ENCODE measurements at regions of chr17 and their contacts with region 1.

Region 1: DNA sequence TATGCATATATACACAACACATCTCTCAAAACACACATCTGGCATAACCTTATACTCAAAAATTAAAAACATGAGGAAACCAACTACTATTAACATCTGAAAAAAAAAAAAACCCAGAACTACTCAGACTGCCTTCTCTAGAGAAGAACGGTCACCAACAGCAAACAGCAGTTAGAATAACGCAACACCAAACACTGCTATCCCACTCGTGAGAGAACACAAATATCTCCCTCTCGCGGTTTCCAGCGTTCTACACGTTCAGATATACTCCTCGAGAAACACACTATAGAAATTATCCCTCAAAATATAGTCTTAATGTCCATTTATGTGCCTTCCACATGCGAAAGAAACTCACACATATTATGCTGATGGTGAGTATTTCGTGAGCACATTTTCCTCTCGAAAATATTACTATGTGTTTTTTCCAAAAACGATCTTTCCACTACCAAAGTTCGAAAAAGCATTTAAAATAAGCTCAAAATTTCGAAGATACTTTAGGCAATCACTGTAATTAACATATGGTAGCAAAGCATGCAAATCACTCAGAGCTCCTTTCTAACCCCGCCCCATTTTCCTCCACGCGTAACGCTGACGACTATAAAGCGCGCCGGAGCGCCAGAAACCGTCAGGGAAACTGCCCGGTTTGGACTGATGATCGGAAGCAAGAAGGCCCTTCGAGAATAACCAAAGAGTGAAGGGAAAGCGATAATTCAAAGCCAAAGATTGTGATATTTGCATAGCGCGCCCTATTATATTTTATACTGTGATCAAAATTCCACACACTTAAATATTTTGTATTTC is 60.1 kb downstream of the TEX14 start:
- DNase-seq: peak; percentile 97 to 98
- H3K4me3 ChIP-seq: peak overlapping the region; percentile 33
- H3K4me3 Mint-ChIP-seq: no peak overlapping the region
- H3K27ac Mint-ChIP-seq: no peak overlapping the region
- H3K4me1 ChIP-seq: peaks cover 7% of the 10 kb centered on the region; the same call in 1 of the 2 replicates
- H3K4me1 Mint-ChIP-seq: no peaks in the 10 kb centered on the region
- H3K27me3 ChIP-seq: no peaks in the 10 kb centered on the region
- H3K27me3 Mint-ChIP-seq: peaks cover 3% of the 10 kb centered on the region
- CTCF ChIP-seq: peak; percentile 2 to 21

Region 2: DNA sequence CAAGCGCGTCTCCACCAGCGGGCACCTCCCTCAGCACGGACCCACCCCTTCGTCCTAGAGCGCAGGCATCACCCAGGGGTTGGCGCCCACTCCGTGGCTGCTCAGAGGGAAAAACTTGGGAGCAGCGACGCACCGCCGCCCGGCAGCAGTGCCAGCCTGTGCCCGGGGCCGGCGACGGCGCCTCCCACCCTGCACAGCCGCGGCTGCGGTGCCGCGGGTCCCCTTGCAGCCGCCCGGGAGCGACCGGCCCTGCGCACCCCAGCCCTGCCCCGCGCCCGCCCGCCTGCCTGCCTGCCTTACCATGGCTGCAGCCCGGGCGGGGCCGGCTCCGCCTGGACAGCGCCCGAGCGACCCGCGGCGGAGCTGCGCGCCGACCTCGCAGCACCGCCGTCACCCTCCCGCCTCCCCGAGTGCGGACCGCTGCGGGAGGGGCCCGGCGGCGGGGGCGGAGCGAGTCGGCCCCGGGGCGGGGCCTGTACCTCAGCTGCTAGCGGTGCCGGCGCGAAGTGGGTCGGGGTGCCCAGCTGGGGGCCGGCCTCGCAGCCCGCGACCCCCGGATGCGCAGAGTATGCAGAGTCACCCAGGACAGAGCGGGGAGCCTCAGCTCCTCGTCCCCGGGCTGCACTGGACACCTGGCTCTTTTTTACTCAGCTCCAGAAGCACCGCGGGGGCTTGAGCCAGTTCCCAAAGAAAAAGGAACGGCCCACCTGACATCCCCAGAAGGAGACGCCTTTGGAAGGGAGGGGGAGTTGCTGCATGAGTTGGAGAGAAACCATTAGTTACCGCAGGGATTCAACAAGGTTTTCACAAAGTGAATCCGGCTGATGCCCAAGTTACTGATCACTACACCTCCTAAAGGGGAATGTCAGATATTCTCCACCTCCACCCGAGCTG is 99.8 kb before region 1 on chr17:
- CTCF ChIA-PET with region 1: no interaction called
- POLR2A ChIA-PET with region 1: interaction called, 16 read pairs
- intact Hi-C with region 1: no loop called
- DNase-seq: peak; percentile 58 to 80
- H3K4me3 ChIP-seq: peak overlapping the region; percentile 33
- H3K4me3 Mint-ChIP-seq: peak overlapping the region; percentile 46
- H3K27ac Mint-ChIP-seq: no peak overlapping the region
- H3K4me1 ChIP-seq: peaks cover 34% of the 10 kb centered on the region
- H3K4me1 Mint-ChIP-seq: peaks cover 16% of the 10 kb centered on the region
- H3K27me3 ChIP-seq: no peaks in the 10 kb centered on the region
- H3K27me3 Mint-ChIP-seq: peaks cover 3% of the 10 kb centered on the region
- CTCF ChIP-seq: no peak

Region 3: DNA sequence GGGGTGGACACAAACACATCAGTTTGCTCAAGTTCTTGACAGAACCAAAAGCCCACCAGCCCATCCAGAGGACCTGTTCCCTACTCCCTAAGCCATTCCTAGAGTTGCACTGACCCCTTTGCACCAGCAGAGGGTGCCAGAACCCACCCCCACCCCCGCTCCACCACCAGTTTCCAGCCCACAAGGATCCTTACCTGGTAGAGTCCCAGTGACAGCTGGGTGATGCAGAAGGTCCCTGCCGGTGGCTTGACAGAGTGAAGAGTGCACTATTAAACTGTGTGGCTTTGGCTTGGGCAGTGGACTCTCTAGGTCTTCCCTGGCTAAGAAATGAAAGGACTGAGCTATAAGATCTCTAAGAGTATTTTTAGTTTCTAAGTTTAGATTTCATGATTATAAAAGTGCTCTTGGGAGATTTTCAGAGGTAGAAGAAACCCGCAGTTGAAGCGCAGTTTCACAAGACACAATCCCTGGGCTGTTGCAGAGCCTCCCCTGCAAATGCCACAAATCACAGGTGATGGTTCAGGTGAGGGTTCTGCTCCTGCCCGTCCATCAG is 43.9 kb before region 1 on chr17:
- CTCF ChIA-PET with region 1: interaction called, 6 read pairs
- POLR2A ChIA-PET with region 1: interaction called, 18 read pairs
- intact Hi-C with region 1: loop called (anchors 1 kb)
- DNase-seq: peak; percentile 74 to 79
- H3K4me3 ChIP-seq: no peak overlapping the region
- H3K4me3 Mint-ChIP-seq: no peak overlapping the region
- H3K27ac Mint-ChIP-seq: no peak overlapping the region
- H3K4me1 ChIP-seq: no peaks in the 10 kb centered on the region
- H3K4me1 Mint-ChIP-seq: no peaks in the 10 kb centered on the region
- H3K27me3 ChIP-seq: no peaks in the 10 kb centered on the region
- H3K27me3 Mint-ChIP-seq: peaks cover 5% of the 10 kb centered on the region
- CTCF ChIP-seq: peak; percentile 93 to 98

Region 4: GRCh38 chr17:58643140-58643539 is 11.4 kb after region 1 on chr17:
- CTCF ChIA-PET with region 1: no interaction called
- POLR2A ChIA-PET with region 1: interaction called, 22 read pairs
- intact Hi-C with region 1: no loop called
- DNase-seq: no peak
- H3K4me3 ChIP-seq: no peak overlapping the region
- H3K4me3 Mint-ChIP-seq: no peak overlapping the region
- H3K27ac Mint-ChIP-seq: no peak overlapping the region
- H3K4me1 ChIP-seq: no peaks in the 10 kb centered on the region; the same call in 1 of the 2 replicates
- H3K4me1 Mint-ChIP-seq: no peaks in the 10 kb centered on the region
- H3K27me3 ChIP-seq: no peaks in the 10 kb centered on the region
- H3K27me3 Mint-ChIP-seq: no peaks in the 10 kb centered on the region
- CTCF ChIP-seq: no peak

Region 5: DNA sequence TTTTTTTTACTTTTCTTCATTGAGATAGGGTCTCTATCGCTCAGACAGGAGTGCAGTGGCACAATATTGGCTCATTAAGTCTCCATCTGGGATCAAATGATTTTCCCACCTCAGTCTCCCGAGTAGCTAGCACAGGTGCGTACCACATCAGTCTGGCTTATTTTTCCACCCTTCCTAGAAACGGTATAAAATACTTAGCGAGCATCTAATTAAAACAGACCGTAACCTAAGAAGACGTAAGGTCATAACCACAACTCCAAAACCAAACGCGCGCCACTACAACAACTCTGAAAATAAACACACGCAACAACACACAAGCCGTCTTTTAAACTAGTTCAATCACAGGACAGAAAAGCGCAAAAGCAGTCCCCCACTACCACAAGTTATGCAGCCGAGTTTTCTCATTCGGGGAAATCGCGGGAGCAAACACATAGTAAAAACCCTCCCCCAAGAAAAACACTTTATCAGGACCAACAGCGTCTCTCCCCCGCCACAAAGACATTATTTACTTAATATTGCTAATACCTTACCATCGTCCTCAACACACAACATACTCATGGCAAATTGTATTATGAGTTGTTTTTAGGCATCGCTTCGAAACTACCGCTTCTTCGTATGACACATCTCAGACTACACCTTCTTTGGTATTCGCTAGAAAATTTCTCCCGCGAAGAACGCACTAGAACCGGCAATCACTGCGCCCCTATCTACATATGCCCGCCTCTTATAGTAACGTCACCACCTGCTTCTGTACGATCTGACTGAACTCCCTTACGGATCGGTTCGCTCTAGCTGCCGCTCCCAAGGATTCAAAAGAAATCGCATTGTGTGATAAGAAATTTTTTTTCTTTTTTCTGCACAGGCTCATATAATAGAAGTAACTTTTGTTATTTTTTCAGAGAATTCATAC is 27.3 kb after region 1 on chr17:
- CTCF ChIA-PET with region 1: no interaction called
- POLR2A ChIA-PET with region 1: interaction called, 34 read pairs
- intact Hi-C with region 1: loop called (anchors 1 kb)
- DNase-seq: peak; percentile 90 to 96
- H3K4me3 ChIP-seq: peak overlapping the region; percentile 43
- H3K4me3 Mint-ChIP-seq: peak overlapping the region; percentile 70
- H3K27ac Mint-ChIP-seq: peak overlapping the region; percentile 99
- H3K4me1 ChIP-seq: no peaks in the 10 kb centered on the region
- H3K4me1 Mint-ChIP-seq: peaks cover 11% of the 10 kb centered on the region
- H3K27me3 ChIP-seq: no peaks in the 10 kb centered on the region
- H3K27me3 Mint-ChIP-seq: peaks cover 3% of the 10 kb centered on the region
- CTCF ChIP-seq: no peak

Region 6: DNA sequence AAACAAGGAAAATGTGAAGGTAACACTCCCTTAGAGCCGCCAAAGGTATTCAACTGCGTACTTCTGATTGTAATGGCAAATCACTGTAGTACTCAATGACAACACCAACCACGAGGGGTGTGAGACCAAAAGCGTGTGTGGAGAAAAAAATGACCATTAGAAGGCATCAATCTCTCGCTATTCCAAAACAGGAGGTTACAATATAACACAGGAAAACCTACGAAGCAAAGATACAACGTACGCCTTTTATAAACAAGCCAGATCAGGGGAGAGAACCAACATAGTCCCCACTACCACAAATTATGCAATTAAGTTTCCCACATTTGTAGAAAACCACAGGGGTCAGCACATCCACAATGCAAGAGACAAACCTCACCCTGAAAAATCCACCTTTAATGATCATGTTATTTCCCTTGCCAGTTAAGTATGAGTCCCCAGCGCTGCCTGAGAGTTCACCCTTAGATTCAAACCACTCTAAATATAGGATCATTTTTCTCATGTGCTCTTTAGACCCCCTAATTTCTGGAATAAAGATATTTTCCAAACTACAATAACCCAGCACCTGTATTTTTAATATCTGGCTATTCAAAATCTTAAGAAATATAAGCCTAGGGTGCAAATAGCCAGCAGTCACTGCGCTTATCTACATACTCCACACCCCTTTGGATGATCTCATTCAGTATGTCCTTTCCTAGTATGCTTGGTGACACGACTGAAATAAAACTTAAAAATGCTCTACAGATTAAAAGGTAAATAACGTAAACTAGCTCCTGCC is 47.7 kb after region 1 on chr17:
- CTCF ChIA-PET with region 1: no interaction called
- POLR2A ChIA-PET with region 1: interaction called, 13 read pairs
- intact Hi-C with region 1: loop called (anchors 10 kb)
- DNase-seq: peak; percentile 72 to 78
- H3K4me3 ChIP-seq: no peak overlapping the region
- H3K4me3 Mint-ChIP-seq: peak overlapping the region; percentile 49
- H3K27ac Mint-ChIP-seq: peak overlapping the region; percentile 97
- H3K4me1 ChIP-seq: peaks cover 4% of the 10 kb centered on the region; the same call in 1 of the 2 replicates
- H3K4me1 Mint-ChIP-seq: peaks cover 13% of the 10 kb centered on the region
- H3K27me3 ChIP-seq: no peaks in the 10 kb centered on the region
- H3K27me3 Mint-ChIP-seq: no peaks in the 10 kb centered on the region
- CTCF ChIP-seq: no peak

Region 7: DNA sequence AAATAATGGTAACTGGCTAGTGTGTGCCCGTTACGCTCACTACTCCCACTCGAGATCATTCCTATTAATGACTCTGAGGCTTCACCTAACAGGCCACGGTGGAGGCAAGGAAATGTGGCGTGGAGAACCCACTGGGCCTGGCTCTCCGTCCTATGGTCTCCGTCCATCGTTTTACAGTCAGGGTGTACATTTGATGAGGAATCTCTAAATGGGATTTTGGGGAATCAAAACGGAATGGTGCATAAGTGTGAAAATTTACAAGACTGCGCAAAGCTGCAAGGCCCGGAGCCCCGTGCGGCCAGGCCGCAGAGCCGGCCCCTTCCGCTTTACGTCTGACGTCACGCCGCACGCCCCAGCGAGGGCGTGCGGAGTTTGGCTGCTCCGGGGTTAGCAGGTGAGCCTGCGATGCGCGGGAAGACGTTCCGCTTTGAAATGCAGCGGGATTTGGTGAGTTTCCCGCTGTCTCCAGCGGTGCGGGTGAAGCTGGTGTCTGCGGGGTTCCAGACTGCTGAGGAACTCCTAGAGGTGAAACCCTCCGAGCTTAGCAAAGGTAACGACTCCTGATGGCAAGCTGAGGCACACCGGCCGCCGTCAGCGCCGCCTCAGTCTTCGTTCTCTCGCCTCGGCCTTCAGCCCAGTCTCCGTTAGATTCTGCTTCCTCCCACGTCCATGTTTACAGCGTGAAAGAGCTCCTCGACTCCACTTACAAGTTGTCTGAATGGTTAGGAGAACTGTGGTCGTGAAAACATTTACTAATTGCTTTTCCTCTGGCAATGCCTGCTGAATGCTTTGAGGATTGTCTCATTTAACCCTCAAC is 60.7 kb after region 1 on chr17 and contains the start of gene RAD51C:
- CTCF ChIA-PET with region 1: interaction called, 5 read pairs
- POLR2A ChIA-PET with region 1: interaction called, 19 read pairs
- intact Hi-C with region 1: loop called (anchors 10 kb)
- DNase-seq: peak; percentile 87 to 90
- H3K4me3 ChIP-seq: peak within 1 kb of the TSS; percentile 47
- H3K4me3 Mint-ChIP-seq: peak within 1 kb of the TSS; percentile 91
- H3K27ac Mint-ChIP-seq: peak within 1 kb of the TSS; percentile 86
- H3K4me1 ChIP-seq: peaks cover 18% of the 10 kb centered on the region
- H3K4me1 Mint-ChIP-seq: peaks cover 11% of the 10 kb centered on the region
- H3K27me3 ChIP-seq: no peaks in the 10 kb centered on the region
- H3K27me3 Mint-ChIP-seq: no peaks in the 10 kb centered on the region
- CTCF ChIP-seq: no peak
- total RNA-seq, gene RAD51C: 59.0 and 61.2 TPM in 2 replicates

Region 8: DNA sequence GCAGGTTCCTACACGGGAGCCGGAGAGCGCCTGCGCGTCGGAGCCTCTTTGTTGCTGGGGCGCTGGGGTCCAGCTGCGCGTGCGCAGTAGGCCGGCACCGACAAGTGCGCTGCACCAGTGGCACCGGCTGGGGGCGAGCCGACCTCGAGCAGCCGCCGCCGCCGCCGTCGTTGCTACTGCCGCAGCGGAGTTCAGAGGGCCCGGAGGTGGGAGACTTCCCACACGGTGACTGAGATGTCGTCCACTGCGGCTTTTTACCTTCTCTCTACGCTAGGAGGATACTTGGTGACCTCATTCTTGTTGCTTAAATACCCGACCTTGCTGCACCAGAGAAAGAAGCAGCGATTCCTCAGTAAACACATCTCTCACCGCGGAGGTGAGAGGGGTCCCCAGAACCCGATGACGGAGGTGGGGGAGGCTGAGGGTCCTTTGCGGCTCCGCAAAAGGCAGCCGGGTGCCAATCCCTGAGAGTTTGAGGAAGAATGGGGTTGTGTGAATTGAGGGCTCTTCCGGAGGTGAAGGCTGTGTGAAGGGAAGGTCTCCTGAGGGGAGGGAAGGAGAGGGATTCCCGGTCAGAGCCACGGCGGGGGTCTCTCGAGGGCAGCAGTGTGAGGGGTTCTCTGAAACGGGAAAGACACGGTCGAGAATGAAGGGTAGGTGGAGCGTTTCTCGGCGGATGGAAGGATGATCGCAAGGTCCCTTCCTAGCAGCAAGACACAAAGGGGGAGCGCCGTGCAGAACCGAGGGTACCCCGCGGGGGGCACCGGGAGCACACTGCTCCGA is 588.8 kb after region 1 on chr17 and contains the start of gene GDPD1:
- CTCF ChIA-PET with region 1: no interaction called
- POLR2A ChIA-PET with region 1: no interaction called
- intact Hi-C with region 1: no loop called
- DNase-seq: peak; percentile 95 to 99
- H3K4me3 ChIP-seq: peak within 1 kb of the TSS; percentile 51
- H3K4me3 Mint-ChIP-seq: peak within 1 kb of the TSS; percentile 95
- H3K27ac Mint-ChIP-seq: peak within 1 kb of the TSS; percentile 88
- H3K4me1 ChIP-seq: no peaks in the 10 kb centered on the region
- H3K4me1 Mint-ChIP-seq: no peaks in the 10 kb centered on the region
- H3K27me3 ChIP-seq: no peaks in the 10 kb centered on the region
- H3K27me3 Mint-ChIP-seq: no peaks in the 10 kb centered on the region
- CTCF ChIP-seq: peak; percentile 53 to 54
- total RNA-seq, gene GDPD1: 1.2 and 2.9 TPM in 2 replicates